Activated CD8-positive, alpha-beta T cell treated with anti-CD3 and anti-CD28 coated beads, Interleukin-2, amount 10 ng/mL, durations not matched to agents 7 days and 5 days (primary cell): ENCODE measurements at regions of chr4 and their contacts with region 1.

Region 1: DNA sequence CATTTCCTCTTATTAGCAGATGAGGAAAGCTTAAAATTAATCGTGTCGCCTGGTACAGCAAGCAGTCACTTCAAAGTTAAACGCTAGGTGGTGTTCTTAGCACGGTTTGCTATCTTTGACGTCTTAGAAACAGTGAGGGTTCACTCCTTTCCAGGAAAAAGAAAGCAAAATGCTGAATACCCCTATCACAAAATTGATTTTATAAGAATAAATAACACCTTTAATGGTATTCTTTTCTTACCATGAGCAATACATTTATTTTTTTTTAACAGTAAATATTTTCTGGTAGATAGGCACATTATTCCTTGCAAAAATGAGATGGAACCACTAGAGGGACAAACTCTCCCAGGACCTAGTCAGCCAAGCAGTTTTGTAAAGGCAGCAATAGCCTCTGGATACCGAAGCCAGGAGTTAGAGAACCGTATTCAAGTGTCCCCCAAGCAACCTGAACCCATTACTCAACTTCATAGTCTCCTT is 153.9 kb downstream of the KDR start:
- DNase-seq: peak; percentile 25
- ATAC-seq: no peak
- H3K4me3 Mint-ChIP-seq: no peak overlapping the region
- H3K27ac Mint-ChIP-seq: no peak overlapping the region
- H3K4me1 Mint-ChIP-seq: no peaks in the 10 kb centered on the region
- H3K27me3 Mint-ChIP-seq: peaks cover 5% of the 10 kb centered on the region

Region 2: DNA sequence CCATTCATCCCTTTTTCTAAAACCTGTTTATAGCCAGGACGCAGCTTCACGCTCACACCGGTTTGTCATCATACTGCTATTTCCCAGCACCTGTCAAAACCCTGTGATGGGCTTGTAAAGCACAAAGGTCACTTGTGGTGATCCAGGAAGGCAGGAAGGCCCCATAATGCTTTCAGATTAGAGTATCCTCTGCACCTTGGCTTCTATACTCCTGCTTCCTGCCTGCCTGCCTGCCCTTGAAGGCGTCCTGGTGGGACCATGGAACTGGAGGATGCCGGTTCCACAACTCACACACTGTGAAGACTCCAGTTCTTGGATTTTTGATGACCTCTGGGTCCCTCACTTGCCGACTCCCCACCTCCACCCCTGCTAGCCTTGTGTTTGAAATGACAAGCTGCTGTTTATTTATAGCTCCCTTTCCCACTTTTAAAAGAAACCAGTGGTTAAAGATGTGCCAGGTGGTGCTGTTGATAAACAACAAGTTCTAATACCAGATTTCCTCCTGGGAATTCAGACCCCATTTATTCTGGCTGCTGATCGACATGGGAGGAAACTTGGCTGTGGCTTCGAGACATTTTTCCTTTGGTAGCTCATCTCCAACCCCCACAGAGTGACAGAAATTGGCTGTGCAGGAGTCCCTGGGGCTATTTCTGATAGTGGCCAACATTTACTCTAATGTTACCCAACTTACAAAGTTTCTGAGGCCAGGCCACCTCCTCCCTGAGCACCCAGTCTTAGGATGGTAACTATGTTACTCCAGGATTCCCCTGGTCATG is 57.6 kb before region 1 on chr4:
- CTCF ChIA-PET with region 1: no interaction called
- POLR2A ChIA-PET with region 1: no interaction called
- DNase-seq: no peak
- ATAC-seq: no peak
- H3K4me3 Mint-ChIP-seq: no peak overlapping the region
- H3K27ac Mint-ChIP-seq: no peak overlapping the region
- H3K4me1 Mint-ChIP-seq: peaks cover 10% of the 10 kb centered on the region
- H3K27me3 Mint-ChIP-seq: no peaks in the 10 kb centered on the region

Region 3: GRCh38 chr4:54986095-54986846 is 14.8 kb after region 1 on chr4:
- CTCF ChIA-PET with region 1: interaction called, 10 read pairs
- POLR2A ChIA-PET with region 1: no interaction called
- DNase-seq: no peak
- ATAC-seq: no peak
- H3K4me3 Mint-ChIP-seq: no peak overlapping the region
- H3K27ac Mint-ChIP-seq: no peak overlapping the region
- H3K4me1 Mint-ChIP-seq: no peaks in the 10 kb centered on the region
- H3K27me3 Mint-ChIP-seq: peaks cover 14% of the 10 kb centered on the region

Region 4: DNA sequence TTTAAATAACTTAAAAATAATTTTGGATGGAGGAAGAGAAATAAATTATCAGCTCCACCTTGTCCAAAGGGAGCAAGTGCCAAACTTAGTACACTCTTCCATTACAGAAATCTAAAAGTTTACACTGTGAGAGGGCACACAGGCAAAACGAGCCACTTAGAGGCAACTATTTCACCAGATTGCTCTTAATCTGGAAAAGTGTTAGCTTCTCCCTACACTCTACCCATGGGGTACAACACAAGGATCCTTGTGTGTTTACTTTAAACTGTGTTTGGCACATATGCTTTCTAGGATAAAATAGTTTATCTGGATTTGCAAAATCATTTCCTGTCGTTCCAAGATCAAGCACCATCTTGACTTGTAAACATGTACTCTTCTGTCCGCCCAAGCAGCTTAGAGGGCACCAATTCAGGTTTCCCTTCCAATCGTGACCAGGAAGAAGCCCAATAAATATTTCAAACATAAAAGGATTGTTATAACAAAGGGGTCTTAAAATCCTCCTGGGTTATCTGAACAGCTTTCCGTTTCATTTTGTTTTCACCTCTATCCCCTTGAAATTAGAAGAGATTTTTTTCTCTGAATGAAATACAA is 182.9 kb after region 1 on chr4:
- CTCF ChIA-PET with region 1: no interaction called
- POLR2A ChIA-PET with region 1: no interaction called
- DNase-seq: no peak
- ATAC-seq: no peak
- H3K4me3 Mint-ChIP-seq: no peak overlapping the region
- H3K27ac Mint-ChIP-seq: no peak overlapping the region
- H3K4me1 Mint-ChIP-seq: no peaks in the 10 kb centered on the region
- H3K27me3 Mint-ChIP-seq: peaks cover 24% of the 10 kb centered on the region

Region 5: DNA sequence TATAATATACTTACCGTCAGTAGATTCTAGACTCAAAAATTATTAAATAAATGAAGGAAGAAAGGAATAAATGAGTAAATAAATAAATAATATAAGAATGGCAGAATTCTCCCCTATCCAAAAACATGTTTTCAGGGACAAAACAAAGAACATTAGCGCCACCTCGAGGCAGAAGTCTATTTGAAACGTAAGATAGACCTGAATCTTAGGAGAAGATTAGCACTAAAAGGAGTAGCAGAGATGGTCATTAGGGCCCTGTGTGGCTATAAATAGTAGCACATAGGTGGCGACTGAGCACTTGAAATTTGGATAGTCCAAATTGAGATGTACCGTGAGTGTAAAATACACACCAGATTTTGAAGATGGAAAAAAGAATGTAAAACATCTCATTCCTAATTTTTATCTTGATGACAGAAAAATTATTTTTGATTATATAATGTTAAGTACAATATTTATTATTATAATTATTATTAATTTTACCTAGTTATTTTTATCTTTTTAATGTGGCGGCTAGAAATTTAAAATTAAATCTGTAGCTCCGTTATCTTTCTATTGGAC is 350.3 kb after region 1 on chr4:
- CTCF ChIA-PET with region 1: interaction called, 10 read pairs
- POLR2A ChIA-PET with region 1: no interaction called
- DNase-seq: peak; percentile 75
- ATAC-seq: peak; percentile 39
- H3K4me3 Mint-ChIP-seq: no peak overlapping the region
- H3K27ac Mint-ChIP-seq: no peak overlapping the region
- H3K4me1 Mint-ChIP-seq: peaks cover 10% of the 10 kb centered on the region
- H3K27me3 Mint-ChIP-seq: no peaks in the 10 kb centered on the region